ENCODE measurements at regions of chr10 and their contacts with region 1.

Region 1: DNA sequence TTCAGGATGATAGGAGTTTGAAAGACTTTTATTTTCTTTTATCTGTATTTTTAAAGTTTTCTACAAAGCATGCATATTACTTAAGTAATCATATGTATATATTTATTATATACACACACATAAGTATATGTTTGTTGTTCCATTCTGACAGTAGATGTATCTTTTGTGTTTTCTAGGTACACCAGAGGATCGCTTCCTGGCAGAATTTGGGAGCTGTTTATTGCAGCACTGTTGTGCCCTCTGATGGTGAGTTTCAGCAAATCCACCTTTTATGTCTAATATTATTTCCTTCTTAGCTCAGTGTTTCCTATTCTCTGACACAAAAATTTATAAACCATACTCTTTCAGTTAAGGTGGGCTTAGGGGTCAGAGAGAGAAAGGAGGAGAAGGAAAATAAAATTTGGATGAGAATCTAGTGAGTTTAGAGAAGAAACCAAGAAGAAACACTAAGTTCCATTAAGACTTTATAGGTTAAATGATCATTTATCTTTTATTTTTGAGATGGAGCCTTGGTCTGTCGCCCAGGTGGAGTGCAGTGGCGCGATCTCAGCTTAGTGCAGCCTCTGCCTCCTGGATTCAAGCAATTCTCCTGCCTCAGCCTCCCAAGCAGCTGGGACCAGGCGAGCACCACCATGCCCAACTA is 59.2 kb upstream of the OIT3 start:
- DNase-seq: peak; percentile 4
- H3K4me3 ChIP-seq: no peak overlapping the region
- H3K27me3 ChIP-seq: no peaks in the 10 kb centered on the region
- CTCF ChIP-seq: peak; percentile 58

Region 2: GRCh38 chr10:72375585-72375984 is 458.7 kb before region 1 on chr10:
- CTCF ChIA-PET with region 1: interaction called, 11 read pairs
- POLR2A ChIA-PET with region 1: no interaction called
- DNase-seq: no peak
- H3K4me3 ChIP-seq: no peak overlapping the region
- H3K27me3 ChIP-seq: no peaks in the 10 kb centered on the region
- CTCF ChIP-seq: peak; percentile 21; the same call in 1 of the 2 replicates

Region 3: DNA sequence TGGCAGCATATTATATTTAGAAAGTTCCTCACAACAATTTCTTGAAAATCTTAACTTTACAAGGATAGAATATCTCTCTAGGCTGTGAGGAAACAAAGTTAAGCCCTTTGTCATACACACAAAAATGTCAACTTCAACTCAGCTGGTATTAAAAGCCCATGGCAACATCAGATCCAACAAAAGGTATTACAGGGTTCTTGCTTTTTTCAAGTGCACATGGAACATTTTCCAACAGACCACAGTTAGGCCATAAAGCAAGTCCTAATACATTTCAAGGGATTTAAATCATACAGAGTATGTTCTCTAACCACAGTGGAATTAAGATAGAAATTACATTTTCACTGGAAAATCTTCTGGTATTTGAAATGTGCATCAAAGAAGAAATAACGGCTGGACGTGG is 12.7 kb before region 1 on chr10:
- CTCF ChIA-PET with region 1: interaction called, 11 read pairs
- POLR2A ChIA-PET with region 1: no interaction called
- DNase-seq: no peak
- H3K4me3 ChIP-seq: no peak overlapping the region
- H3K27me3 ChIP-seq: no peaks in the 10 kb centered on the region
- CTCF ChIP-seq: no peak